IMR-90 (cell line): ENCODE measurements at regions of chr11 and their contacts with region 1.

Region 1: GRCh38 chr11:118689851-118690552 is 10.6 kb upstream of the TREH start:
- DNase-seq: peak; percentile 73
- ATAC-seq: peak; percentile 98
- H3K4me3 ChIP-seq: peak overlapping the region; percentile 48
- H3K27ac ChIP-seq: peak overlapping the region; percentile 39
- H3K4me1 ChIP-seq: peaks cover 14% of the 10 kb centered on the region
- H3K27me3 ChIP-seq: peaks cover 5% of the 10 kb centered on the region
- CTCF ChIP-seq: peak; percentile 91
- POLR2A ChIP-seq: no peak
- RAD21 ChIP-seq: peak; percentile 85

Region 2: GRCh38 chr11:118749429-118749828 is 59.4 kb after region 1 on chr11:
- CTCF ChIA-PET with region 1: no interaction called
- POLR2A ChIA-PET with region 1: no interaction called
- dilution Hi-C with region 1: no loop called
- in situ Hi-C with region 1: no loop called
- intact Hi-C with region 1: loop called (anchors 2 kb)
- DNase-seq: no peak
- ATAC-seq: no peak
- H3K4me3 ChIP-seq: no peak overlapping the region
- H3K27ac ChIP-seq: no peak overlapping the region
- H3K4me1 ChIP-seq: no peaks in the 10 kb centered on the region
- H3K27me3 ChIP-seq: no peaks in the 10 kb centered on the region
- CTCF ChIP-seq: no peak
- POLR2A ChIP-seq: no peak
- RAD21 ChIP-seq: no peak

Region 3: GRCh38 chr11:118928108-118928870 is 238.3 kb after region 1 on chr11:
- CTCF ChIA-PET with region 1: interaction called, 5 read pairs
- POLR2A ChIA-PET with region 1: no interaction called
- dilution Hi-C with region 1: no loop called
- in situ Hi-C with region 1: no loop called
- intact Hi-C with region 1: loop called (anchors 1 kb)
- DNase-seq: peak; percentile 92
- ATAC-seq: peak; percentile 68
- H3K4me3 ChIP-seq: peak overlapping the region; percentile 69
- H3K27ac ChIP-seq: peak overlapping the region; percentile 88
- H3K4me1 ChIP-seq: peaks cover 3% of the 10 kb centered on the region; the same call in 1 of the 2 replicates
- H3K27me3 ChIP-seq: no peaks in the 10 kb centered on the region
- CTCF ChIP-seq: peak; percentile 88
- POLR2A ChIP-seq: no peak
- RAD21 ChIP-seq: peak; percentile 81

Region 4: DNA sequence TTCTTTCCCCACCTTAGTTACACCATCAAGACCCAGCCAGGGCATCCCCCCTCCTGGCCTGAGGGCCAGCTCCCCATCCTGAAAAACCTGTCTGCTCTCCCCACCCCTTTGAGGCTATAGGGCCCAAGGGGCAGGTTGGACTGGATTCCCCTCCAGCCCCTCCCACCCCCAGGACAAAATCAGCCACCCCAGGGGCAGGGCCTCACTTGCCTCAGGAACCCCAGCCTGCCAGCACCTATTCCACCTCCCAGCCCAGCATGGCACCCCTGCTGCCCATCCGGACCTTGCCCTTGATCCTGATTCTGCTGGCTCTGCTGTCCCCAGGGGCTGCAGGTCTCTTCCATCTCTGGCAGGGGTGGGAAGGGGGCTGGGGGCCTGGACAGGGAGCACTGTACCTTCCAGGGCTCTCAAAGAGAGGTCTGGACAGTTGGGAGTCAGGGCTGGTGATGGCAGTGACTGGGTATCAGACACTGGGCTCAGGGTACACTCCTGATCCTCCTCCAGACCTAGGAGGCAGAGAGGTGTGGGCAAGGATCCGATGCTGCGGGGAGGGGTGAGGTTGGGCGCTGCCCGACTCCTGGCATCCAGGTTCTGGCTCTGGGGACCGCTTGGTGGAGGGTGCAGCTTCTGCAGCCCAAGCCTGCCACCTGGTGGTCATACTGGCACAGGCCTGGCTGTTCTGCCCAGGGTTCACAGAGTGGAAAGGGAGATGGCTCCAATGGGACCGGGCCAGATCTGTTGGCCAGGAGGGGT is 266.3 kb after region 1 on chr11 and contains the start of gene UPK2:
- CTCF ChIA-PET with region 1: interaction called, 10 read pairs
- POLR2A ChIA-PET with region 1: no interaction called
- dilution Hi-C with region 1: no loop called
- in situ Hi-C with region 1: loop called (anchors 5 kb)
- intact Hi-C with region 1: loop called (anchors 1 kb)
- DNase-seq: peak; percentile 71
- ATAC-seq: peak; percentile 100
- H3K4me3 ChIP-seq: no peak within 1 kb of the TSS
- H3K27ac ChIP-seq: no peak within 1 kb of the TSS
- H3K4me1 ChIP-seq: no peaks in the 10 kb centered on the region
- H3K27me3 ChIP-seq: peaks cover 51% of the 10 kb centered on the region
- CTCF ChIP-seq: peak; percentile 97
- POLR2A ChIP-seq: peak; percentile 57; the same call in 1 of the 2 replicates
- RAD21 ChIP-seq: peak; percentile 98
- total RNA-seq, gene UPK2: not detected in 2 replicates